Transverse colon (tissue), 4 donors: ENCODE measurements at regions of chr9 and their contacts with region 1.

Region 1: DNA sequence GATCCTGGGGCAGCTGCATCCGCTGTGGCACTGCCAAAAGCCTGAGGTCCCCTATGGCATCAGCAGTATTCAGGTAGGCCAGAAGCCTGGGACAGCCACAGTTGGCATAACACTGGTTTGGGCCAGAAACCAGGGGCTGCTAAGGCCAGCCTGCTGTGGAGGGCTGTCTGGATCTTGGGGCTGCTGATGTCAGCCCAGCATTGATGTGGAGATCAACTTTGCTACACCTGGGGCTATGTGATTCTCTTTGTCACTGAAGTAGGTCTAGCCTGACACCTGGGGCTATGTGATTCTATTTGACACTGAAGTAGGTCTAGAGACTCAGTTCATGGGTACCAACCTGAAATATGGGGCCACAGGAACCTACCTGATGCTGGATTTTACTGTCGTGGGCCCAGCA is 411.5 kb downstream of the RASEF start:
- DNase-seq: no peak
- H3K4me3 ChIP-seq: no peak overlapping the region
- H3K27ac ChIP-seq: no peak overlapping the region
- H3K4me1 ChIP-seq: no peaks in the 10 kb centered on the region
- H3K27me3 ChIP-seq: no peaks in the 10 kb centered on the region
- CTCF ChIP-seq: no peak
- EP300 ChIP-seq: no peak
- POLR2A ChIP-seq: no peak

Region 2: DNA sequence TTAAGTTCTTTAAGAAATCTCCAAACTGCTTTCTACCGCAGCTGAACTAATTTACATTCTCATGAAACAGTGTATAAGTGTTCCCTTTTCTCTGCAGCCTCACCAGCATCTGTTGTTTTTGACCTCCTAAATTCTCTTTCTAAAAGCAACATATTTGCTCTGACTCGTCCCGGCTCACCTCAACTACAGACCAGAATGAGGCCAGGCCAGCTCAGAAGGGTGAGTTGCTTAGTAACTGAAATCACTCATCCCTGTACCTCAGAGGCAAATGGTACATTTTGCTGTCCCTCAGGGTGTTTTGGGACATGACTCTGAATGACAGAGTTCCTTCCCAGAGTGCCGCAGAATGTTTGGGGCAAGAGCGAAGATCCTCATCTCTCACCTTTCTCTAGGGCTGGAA is 759.2 kb after region 1 on chr9:
- in situ Hi-C with region 1: no loop called
- intact Hi-C with region 1: no loop called
- DNase-seq: no peak
- H3K4me3 ChIP-seq: no peak overlapping the region
- H3K27ac ChIP-seq: no peak overlapping the region
- H3K4me1 ChIP-seq: no peaks in the 10 kb centered on the region
- H3K27me3 ChIP-seq: no peaks in the 10 kb centered on the region
- CTCF ChIP-seq: no peak
- EP300 ChIP-seq: no peak
- POLR2A ChIP-seq: no peak

Region 3: DNA sequence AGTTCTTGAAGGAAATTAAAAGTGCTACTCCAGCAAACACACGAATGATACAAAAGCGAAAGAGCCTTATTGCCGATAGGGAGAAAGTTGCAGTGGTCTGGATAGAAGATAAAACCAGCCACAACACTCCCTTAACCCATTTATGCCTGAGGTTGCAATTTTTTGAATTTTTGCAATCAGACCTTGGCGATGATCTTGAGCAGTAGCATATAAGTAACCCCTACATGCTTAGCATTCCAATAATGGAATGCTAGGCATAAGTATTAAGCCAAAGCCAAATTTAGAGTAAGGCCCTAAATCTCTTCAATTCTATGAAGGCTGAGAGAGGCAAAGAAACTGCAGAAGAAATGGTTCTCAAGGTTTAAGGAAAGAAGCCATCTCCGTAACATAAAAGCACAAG is 1535.6 kb after region 1 on chr9:
- in situ Hi-C with region 1: no loop called
- intact Hi-C with region 1: loop called (anchors 10 kb)
- DNase-seq: no peak
- H3K4me3 ChIP-seq: no peak overlapping the region
- H3K27ac ChIP-seq: no peak overlapping the region
- H3K4me1 ChIP-seq: peaks cover 0 to 3% (median 2%) of the 10 kb centered on the region in 4 donors
- H3K27me3 ChIP-seq: no peaks in the 10 kb centered on the region
- CTCF ChIP-seq: no peak
- EP300 ChIP-seq: no peak
- POLR2A ChIP-seq: no peak